ENCODE measurements at regions of chr20 and their contacts with region 1.

Region 1: GRCh38 chr20:51385646-51386530 is 156.6 kb downstream of the NFATC2 start:
- DNase-seq: peak; percentile 50
- H3K4me3 Mint-ChIP-seq: no peak overlapping the region
- H3K27ac Mint-ChIP-seq: peak overlapping the region; percentile 16
- H3K4me1 Mint-ChIP-seq: peaks cover 39% of the 10 kb centered on the region
- H3K27me3 Mint-ChIP-seq: no peaks in the 10 kb centered on the region

Region 2: GRCh38 chr20:50834599-50835005 is 551.3 kb before region 1 on chr20:
- CTCF ChIA-PET with region 1: no interaction called
- DNase-seq: no peak
- H3K4me3 Mint-ChIP-seq: no peak overlapping the region
- H3K27ac Mint-ChIP-seq: no peak overlapping the region
- H3K4me1 Mint-ChIP-seq: peaks cover 2% of the 10 kb centered on the region
- H3K27me3 Mint-ChIP-seq: no peaks in the 10 kb centered on the region

Region 3: GRCh38 chr20:50958615-50959542 is 427.0 kb before region 1 on chr20 and contains the start of gene MOCS3:
- CTCF ChIA-PET with region 1: no interaction called
- DNase-seq: peak; percentile 91
- H3K4me3 Mint-ChIP-seq: peak within 1 kb of the TSS; percentile 99
- H3K27ac Mint-ChIP-seq: peak within 1 kb of the TSS; percentile 96
- H3K4me1 Mint-ChIP-seq: peaks cover 58% of the 10 kb centered on the region
- H3K27me3 Mint-ChIP-seq: no peaks in the 10 kb centered on the region

Region 4: GRCh38 chr20:51195419-51195901 is 190.4 kb before region 1 on chr20:
- CTCF ChIA-PET with region 1: no interaction called
- DNase-seq: no peak
- H3K4me3 Mint-ChIP-seq: no peak overlapping the region
- H3K27ac Mint-ChIP-seq: no peak overlapping the region
- H3K4me1 Mint-ChIP-seq: no peaks in the 10 kb centered on the region
- H3K27me3 Mint-ChIP-seq: peaks cover 28% of the 10 kb centered on the region

Region 5: GRCh38 chr20:51372176-51372803 is 13.6 kb before region 1 on chr20:
- CTCF ChIA-PET with region 1: interaction called, 16 read pairs
- DNase-seq: peak; percentile 70
- H3K4me3 Mint-ChIP-seq: no peak overlapping the region
- H3K27ac Mint-ChIP-seq: no peak overlapping the region
- H3K4me1 Mint-ChIP-seq: peaks cover 8% of the 10 kb centered on the region
- H3K27me3 Mint-ChIP-seq: peaks cover 9% of the 10 kb centered on the region

Region 6: DNA sequence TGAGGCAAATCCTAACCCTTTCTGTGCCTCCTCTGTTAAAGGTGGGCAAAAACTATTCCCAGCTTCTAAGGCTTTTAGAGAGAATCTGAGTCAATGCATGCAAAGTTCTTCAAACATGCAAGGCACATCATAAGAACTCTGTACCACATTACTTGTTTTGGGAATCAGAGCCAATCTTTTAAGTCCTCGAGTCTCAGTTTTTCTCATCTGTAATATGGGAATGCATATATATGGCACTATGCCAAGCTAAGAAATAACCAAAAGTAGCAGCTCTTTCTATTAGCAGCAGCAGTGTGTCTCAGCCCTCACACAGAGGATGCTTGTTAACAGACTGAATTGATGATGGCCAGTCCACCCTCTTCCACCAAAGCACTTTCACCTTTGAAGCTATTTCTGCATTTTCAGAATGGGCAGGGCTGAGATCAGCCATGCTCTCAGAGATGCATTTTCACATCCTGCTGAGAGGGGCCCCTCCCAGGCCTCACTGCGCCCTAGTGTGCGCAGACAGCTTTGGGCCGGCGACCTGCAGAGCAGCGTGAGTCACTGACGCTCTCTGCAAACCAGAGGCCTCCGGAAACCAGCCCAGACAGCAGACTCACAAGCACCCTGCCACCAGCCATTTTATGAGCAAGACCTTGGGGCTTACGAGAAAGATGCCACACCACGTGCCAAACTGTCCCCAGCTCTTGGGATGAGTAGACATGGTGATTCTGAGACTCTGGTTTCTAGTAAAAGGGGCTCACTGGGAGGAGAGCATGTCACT is 18.6 kb after region 1 on chr20:
- CTCF ChIA-PET with region 1: interaction called, 14 read pairs
- DNase-seq: peak; percentile 85
- H3K4me3 Mint-ChIP-seq: peak overlapping the region; percentile 16
- H3K27ac Mint-ChIP-seq: peak overlapping the region; percentile 99
- H3K4me1 Mint-ChIP-seq: peaks cover 77% of the 10 kb centered on the region
- H3K27me3 Mint-ChIP-seq: no peaks in the 10 kb centered on the region

Region 7: GRCh38 chr20:51417250-51418136 is 31.6 kb after region 1 on chr20:
- CTCF ChIA-PET with region 1: interaction called, 10 read pairs
- DNase-seq: no peak
- H3K4me3 Mint-ChIP-seq: no peak overlapping the region
- H3K27ac Mint-ChIP-seq: peak overlapping the region; percentile 85
- H3K4me1 Mint-ChIP-seq: peaks cover 59% of the 10 kb centered on the region
- H3K27me3 Mint-ChIP-seq: no peaks in the 10 kb centered on the region

Region 8: GRCh38 chr20:51434580-51435247 is 48.8 kb after region 1 on chr20:
- CTCF ChIA-PET with region 1: no interaction called
- DNase-seq: no peak
- H3K4me3 Mint-ChIP-seq: no peak overlapping the region
- H3K27ac Mint-ChIP-seq: no peak overlapping the region
- H3K4me1 Mint-ChIP-seq: peaks cover 37% of the 10 kb centered on the region
- H3K27me3 Mint-ChIP-seq: no peaks in the 10 kb centered on the region

Region 9: GRCh38 chr20:51541189-51542032 is 155.5 kb after region 1 on chr20:
- CTCF ChIA-PET with region 1: interaction called, 23 read pairs
- DNase-seq: peak; percentile 92
- H3K4me3 Mint-ChIP-seq: peak overlapping the region; percentile 99
- H3K27ac Mint-ChIP-seq: peak overlapping the region; percentile 98
- H3K4me1 Mint-ChIP-seq: peaks cover 56% of the 10 kb centered on the region
- H3K27me3 Mint-ChIP-seq: peaks cover 24% of the 10 kb centered on the region

Region 10: DNA sequence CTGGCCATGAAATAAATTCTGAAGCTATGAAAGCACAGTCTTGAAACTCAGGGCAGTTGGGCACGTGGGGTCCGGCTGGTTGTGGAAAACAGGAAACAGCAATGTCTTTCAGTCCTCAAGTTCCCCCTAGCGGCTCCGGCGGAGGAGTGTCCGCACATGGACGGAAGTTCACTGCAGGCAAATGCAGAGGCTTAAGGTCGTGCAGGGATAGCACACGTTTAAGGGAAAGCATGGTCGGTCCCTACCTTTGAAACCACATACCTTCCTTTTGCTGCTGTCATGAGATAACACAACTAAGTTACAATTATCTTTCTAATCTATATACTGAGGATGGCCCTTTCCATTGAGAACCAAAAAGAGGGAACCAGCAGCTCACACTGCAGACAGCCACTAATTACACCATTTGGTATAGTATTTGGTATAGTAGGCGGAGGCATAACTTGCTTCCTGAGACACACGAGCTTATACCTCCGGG is 209.2 kb after region 1 on chr20:
- CTCF ChIA-PET with region 1: interaction called, 63 read pairs
- DNase-seq: peak; percentile 87
- H3K4me3 Mint-ChIP-seq: no peak overlapping the region
- H3K27ac Mint-ChIP-seq: peak overlapping the region; percentile 70
- H3K4me1 Mint-ChIP-seq: peaks cover 18% of the 10 kb centered on the region
- H3K27me3 Mint-ChIP-seq: peaks cover 27% of the 10 kb centered on the region